ENCODE measurements at regions of chr6 and their contacts with region 1.

Region 1: DNA sequence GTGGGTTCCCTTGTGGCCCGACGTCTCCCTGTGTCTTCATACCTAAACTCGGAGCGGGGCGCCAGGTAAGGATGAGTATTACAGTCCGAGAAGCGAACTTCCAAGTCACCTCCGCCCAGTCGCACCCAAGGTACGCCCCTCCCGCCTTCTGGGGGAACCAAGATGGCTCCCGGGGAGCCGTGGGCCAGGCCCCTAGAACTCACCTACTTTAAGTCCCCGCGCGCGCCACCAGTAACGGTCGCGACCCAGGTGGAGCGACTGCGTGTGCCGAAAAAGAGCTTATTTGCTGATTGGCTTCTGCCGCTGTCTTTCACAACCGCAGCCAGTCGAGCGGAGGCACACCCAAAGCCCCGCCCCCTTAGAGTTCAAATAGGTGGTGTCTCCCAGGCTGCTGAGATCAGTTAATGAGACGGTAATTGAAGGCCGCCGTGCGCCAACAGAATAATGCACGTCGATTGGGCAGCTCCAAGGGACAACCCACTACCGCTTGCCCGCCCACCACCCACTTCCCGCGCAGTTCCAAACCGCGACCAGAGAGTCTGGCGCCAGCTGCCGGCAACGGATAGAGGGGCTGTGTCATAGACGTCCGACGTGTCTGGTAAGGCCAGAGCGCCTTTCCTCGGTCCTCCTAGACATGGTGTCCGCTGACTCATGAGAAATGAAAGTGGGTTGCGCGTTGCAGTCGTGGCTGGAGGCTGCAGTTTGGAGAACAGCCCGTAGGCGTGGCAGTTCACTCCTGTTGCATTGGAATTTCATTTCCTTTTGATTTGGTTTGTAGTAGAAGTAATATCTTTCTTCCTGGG is at the start of gene MDC1:
- DNase-seq: peak; percentile 83 to 100 (median 99)
- ATAC-seq: peak; percentile 84
- H3K4me3 ChIP-seq: peak within 1 kb of the TSS; percentile 73
- H3K4me3 Mint-ChIP-seq: peak within 1 kb of the TSS; percentile 90 to 99 (median 96)
- H3K27ac ChIP-seq: peak within 1 kb of the TSS; percentile 84
- H3K27ac Mint-ChIP-seq: peak within 1 kb of the TSS; percentile 97 to 100 (median 99)
- H3K4me1 ChIP-seq: peaks cover 20 to 22% of the 10 kb centered on the region in 2 donors
- H3K4me1 Mint-ChIP-seq: peaks cover 30 to 60% (median 52%) of the 10 kb centered on the region in 7 donors
- H3K27me3 ChIP-seq: no peaks in the 10 kb centered on the region
- H3K27me3 Mint-ChIP-seq: no peaks in the 10 kb centered on the region
- total RNA-seq, gene MDC1: 40.3 to 78.9 (median 62.0) TPM

Region 2: DNA sequence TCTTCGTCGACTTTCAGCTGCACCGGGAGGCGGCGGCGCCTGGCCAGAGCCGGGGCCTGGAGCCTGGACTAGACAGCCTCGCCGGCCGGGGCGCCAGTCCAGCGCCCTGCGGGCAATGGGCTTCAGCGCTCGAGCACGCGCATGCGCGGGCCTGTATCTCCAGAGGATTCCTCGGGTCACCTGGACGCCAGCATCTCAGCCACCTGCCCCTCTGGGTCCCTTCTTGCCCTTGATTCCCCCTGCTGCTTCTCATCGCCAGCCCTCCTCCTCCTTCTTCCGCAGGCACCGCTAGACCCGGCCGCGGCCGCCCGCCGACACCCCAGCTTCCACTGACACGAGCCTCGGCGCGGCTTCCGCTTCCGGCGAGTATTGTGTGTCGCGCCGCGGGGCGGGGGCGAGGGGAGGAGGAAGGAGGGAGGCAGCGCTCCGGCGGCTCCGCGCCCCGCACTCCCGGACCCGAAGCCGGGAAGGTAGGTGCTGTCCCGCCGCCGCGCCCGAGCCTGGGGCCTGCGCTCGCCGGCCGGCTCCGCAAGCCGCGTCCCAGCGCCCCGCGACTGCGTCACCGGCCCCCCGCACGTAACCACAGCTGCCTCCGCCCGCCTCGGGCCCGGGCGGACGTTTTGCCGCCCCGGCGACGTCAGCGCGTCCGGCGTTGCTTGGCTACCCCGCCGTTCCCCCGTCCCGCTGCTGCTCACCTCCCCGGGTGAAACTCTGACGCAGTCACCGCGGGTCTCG is 390.6 kb before region 1 on chr6 and contains the start of gene TRIM39:
- CTCF ChIA-PET with region 1: no interaction called
- POLR2A ChIA-PET with region 1: no interaction called
- intact Hi-C with region 1: loop called (anchors 1 to 2 kb)
- DNase-seq: peak; percentile 88 to 94 (median 92)
- ATAC-seq: peak; percentile 76
- H3K4me3 ChIP-seq: peak within 1 kb of the TSS; percentile 70
- H3K4me3 Mint-ChIP-seq: peak within 1 kb of the TSS; percentile 93 to 99 (median 97)
- H3K27ac ChIP-seq: peak within 1 kb of the TSS; percentile 100
- H3K27ac Mint-ChIP-seq: peak within 1 kb of the TSS; percentile 92 to 100 (median 99)
- H3K4me1 ChIP-seq: peaks cover 34 to 48% of the 10 kb centered on the region in 2 donors
- H3K4me1 Mint-ChIP-seq: peaks cover 42 to 70% (median 63%) of the 10 kb centered on the region in 7 donors
- H3K27me3 ChIP-seq: no peaks in the 10 kb centered on the region
- H3K27me3 Mint-ChIP-seq: no peaks in the 10 kb centered on the region
- total RNA-seq, gene TRIM39: 12.8 to 42.1 (median 26.4) TPM

Region 3: DNA sequence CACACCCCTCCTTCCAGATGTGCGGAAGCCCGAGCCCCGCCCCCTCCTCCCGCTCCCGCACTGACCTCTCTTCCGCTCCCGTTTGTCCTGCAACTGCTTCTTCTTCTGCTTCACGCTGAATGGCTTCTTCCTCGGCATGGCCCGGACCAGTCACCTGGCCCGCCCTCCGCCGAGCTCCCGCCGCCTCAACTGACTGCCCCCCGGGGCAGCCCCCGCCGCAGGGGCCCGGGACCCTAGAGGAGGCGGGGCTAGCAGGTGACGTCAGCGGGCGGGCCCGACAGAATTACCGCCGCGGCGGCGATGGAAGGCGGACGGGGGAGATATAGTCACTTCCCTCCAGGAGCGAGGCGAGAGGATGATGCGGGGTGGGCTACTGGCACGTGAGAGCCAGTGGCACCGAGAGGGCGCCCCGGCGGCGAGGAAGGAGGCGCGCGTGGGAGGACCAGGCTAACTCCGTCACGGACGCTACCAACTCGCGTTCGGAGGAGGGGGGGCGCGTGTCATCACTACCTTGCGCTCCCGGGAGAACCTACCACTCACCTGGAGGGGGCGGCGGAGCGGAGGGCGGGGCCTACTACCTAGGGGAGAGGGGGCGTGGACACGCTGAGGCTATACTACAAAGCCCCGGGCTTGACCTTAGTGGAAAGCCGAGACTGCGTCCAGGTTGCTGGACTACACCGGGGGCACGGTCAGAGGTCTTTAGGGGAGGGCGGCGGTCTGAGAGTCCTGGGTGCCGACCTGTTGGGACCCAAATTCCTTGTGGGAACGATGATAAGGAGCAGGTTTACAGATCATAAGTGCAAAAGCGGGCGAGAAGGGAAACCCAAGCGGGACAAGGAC is 161.0 kb before region 1 on chr6 and contains the start of gene GNL1:
- CTCF ChIA-PET with region 1: no interaction called
- POLR2A ChIA-PET with region 1: interaction called, 4 read pairs
- intact Hi-C with region 1: loop called (anchors 1 kb)
- DNase-seq: peak; percentile 95 to 99 (median 99)
- ATAC-seq: peak; percentile 94
- H3K4me3 ChIP-seq: peak within 1 kb of the TSS; percentile 97
- H3K4me3 Mint-ChIP-seq: peak within 1 kb of the TSS; percentile 92 to 100 (median 98)
- H3K27ac ChIP-seq: peak within 1 kb of the TSS; percentile 97
- H3K27ac Mint-ChIP-seq: peak within 1 kb of the TSS; percentile 98 to 100 (median 99)
- H3K4me1 ChIP-seq: peaks cover 8 to 19% of the 10 kb centered on the region in 2 donors
- H3K4me1 Mint-ChIP-seq: peaks cover 25 to 58% (median 45%) of the 10 kb centered on the region in 7 donors
- H3K27me3 ChIP-seq: no peaks in the 10 kb centered on the region
- H3K27me3 Mint-ChIP-seq: no peaks in the 10 kb centered on the region
- total RNA-seq, gene GNL1: 56.0 to 190 (median 73.1) TPM

Region 4: DNA sequence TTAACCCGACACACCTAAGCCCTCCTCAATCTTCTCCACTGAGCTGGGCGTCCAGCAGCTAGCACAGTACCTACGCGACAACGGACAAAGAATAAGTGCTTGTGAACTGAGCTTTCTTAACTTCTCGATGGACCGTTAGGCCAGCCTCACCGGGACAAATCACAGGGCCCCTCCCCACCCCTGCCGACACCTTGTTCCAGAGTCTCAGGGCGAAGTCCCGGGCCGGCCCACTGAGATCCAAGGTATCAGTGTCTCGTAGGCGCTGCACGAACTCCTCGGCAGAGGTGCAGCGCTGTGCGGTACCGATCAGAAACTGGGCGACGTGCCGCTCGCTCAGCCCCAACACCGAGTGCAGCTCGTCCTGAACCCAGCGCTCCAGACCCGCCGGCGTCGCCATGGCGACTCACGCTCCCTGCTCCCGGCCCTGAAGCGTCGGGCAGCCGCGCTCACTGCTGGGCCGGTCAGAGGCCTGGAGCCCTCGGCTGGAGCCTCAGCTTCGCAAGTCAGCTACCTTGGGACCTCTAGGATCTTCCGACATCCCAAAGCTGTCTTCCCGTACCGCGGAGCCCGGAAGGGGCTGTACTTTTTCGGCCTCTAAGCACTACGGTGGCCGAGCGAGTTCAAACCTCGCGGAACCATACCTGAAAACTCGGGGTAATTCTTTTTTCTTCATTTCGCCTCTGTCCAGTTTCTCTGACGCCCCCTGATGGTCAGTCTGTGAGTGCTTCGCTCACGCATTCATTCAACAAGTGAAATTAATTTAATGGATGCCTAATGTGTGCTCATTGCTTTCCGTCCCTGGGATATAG is 44.6 kb before region 1 on chr6 and contains the start of gene DHX16:
- CTCF ChIA-PET with region 1: interaction called, 304 read pairs
- POLR2A ChIA-PET with region 1: interaction called, 499 read pairs
- intact Hi-C with region 1: no loop called
- DNase-seq: peak; percentile 65 to 85 (median 83)
- ATAC-seq: peak; percentile 93
- H3K4me3 ChIP-seq: peak within 1 kb of the TSS; percentile 74
- H3K4me3 Mint-ChIP-seq: peak within 1 kb of the TSS; percentile 87 to 94 (median 91)
- H3K27ac ChIP-seq: peak within 1 kb of the TSS; percentile 77
- H3K27ac Mint-ChIP-seq: peak within 1 kb of the TSS; percentile 70 to 93 (median 91)
- H3K4me1 ChIP-seq: peaks cover 8 to 15% of the 10 kb centered on the region in 2 donors
- H3K4me1 Mint-ChIP-seq: peaks cover 28 to 46% (median 43%) of the 10 kb centered on the region in 7 donors
- H3K27me3 ChIP-seq: no peaks in the 10 kb centered on the region
- H3K27me3 Mint-ChIP-seq: no peaks in the 10 kb centered on the region
- total RNA-seq, gene DHX16: 25.9 to 51.5 (median 46.7) TPM

Region 5: DNA sequence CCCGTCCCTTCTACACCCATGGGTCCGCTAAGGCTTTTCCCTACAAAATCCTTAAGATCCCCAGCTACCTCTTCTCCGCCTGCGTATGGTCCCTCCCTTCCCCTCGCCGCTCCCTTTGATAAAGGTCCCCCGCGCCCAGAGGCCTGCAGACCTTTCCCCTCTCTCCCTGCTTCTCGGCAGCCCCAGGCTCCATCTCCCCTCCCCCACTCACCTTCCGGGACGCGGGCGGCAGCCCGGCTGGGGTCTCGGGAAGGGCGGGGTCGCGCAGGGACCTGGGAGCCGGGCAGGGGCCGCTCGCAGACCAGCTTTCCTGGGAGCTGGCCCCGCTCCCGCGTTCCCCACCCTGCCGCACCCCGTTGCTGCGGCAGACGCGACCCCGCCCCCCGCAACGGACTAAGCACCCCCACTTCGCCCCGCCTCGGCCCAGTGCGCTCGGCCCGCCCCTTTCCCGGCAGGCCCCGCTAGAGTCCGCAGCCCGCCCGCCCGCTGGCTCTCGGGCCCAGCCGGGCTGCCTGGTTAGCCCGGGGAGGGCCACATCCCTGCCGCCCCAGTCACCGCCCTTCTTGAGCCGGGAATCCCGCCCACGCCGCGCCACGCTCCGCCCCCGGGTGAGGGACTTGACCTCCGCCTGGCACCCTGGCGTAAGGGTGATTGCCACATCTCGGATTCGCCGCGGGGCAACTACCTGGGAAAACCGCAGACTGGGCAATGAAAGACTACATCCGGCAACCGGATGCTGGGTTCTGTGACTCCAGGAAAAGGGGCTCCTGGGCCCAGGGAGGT is 25.3 kb after region 1 on chr6 and contains the start of gene FLOT1:
- CTCF ChIA-PET with region 1: interaction called, 10 read pairs
- POLR2A ChIA-PET with region 1: interaction called, 10 read pairs
- intact Hi-C with region 1: no loop called
- DNase-seq: peak in 7 of 9 donors; percentile 47 to 98 (median 56)
- ATAC-seq: peak; percentile 84
- H3K4me3 ChIP-seq: peak within 1 kb of the TSS; percentile 85
- H3K4me3 Mint-ChIP-seq: peak within 1 kb of the TSS; percentile 84 to 100 (median 93)
- H3K27ac ChIP-seq: peak within 1 kb of the TSS; percentile 83
- H3K27ac Mint-ChIP-seq: peak within 1 kb of the TSS; percentile 84 to 98 (median 93)
- H3K4me1 ChIP-seq: peaks cover 28 to 35% of the 10 kb centered on the region in 2 donors
- H3K4me1 Mint-ChIP-seq: peaks cover 48 to 74% (median 61%) of the 10 kb centered on the region in 7 donors
- H3K27me3 ChIP-seq: no peaks in the 10 kb centered on the region
- H3K27me3 Mint-ChIP-seq: no peaks in the 10 kb centered on the region
- total RNA-seq, gene FLOT1: 59.4 to 204 (median 81.3) TPM

Region 6: GRCh38 chr6:31271641-31272357 is 554.6 kb after region 1 on chr6 and contains the start of gene HLA-C:
- CTCF ChIA-PET with region 1: no interaction called
- POLR2A ChIA-PET with region 1: no interaction called
- intact Hi-C with region 1: loop called in 1 of 2 experiments (anchors 5 kb)
- DNase-seq: peak; percentile 78 to 96 (median 92)
- ATAC-seq: peak; percentile 90
- H3K4me3 ChIP-seq: peak within 1 kb of the TSS; percentile 83
- H3K4me3 Mint-ChIP-seq: peak within 1 kb of the TSS; percentile 89 to 100 (median 94)
- H3K27ac ChIP-seq: peak within 1 kb of the TSS; percentile 99
- H3K27ac Mint-ChIP-seq: peak within 1 kb of the TSS; percentile 99 to 100 (median 100)
- H3K4me1 ChIP-seq: peaks cover 25 to 41% of the 10 kb centered on the region in 2 donors
- H3K4me1 Mint-ChIP-seq: peaks cover 53 to 69% (median 62%) of the 10 kb centered on the region in 7 donors
- H3K27me3 ChIP-seq: no peaks in the 10 kb centered on the region
- H3K27me3 Mint-ChIP-seq: peaks cover 0 to 19% (median 0%) of the 10 kb centered on the region in 5 donors
- total RNA-seq, gene HLA-C: 1,349 to 2,513 (median 1,489) TPM

Measured in naive thymus-derived CD4-positive, alpha-beta T cell (primary cell).